PC-9 (cell line): ENCODE measurements at regions of chr1 and their contacts with region 1.

Region 1: GRCh38 chr1:42146626-42147320 is 6.4 kb upstream of the GUCA2B start:
- DNase-seq: peak; percentile 85 to 89
- H3K4me3 ChIP-seq: no peak overlapping the region
- H3K27ac ChIP-seq: no peak overlapping the region
- H3K4me1 ChIP-seq: peaks cover 26% of the 10 kb centered on the region
- H3K27me3 ChIP-seq: no peaks in the 10 kb centered on the region; the same call in 1 of the 2 replicates
- CTCF ChIP-seq: peak; percentile 94

Region 2: GRCh38 chr1:41919764-41920397 is 226.9 kb before region 1 on chr1:
- CTCF ChIA-PET with region 1: no interaction called
- POLR2A ChIA-PET with region 1: interaction called, 5 read pairs
- intact Hi-C with region 1: loop called (anchors 10 kb)
- DNase-seq: peak; percentile 83
- H3K4me3 ChIP-seq: peak overlapping the region; percentile 87
- H3K27ac ChIP-seq: peak overlapping the region; percentile 75
- H3K4me1 ChIP-seq: peaks cover 57% of the 10 kb centered on the region
- H3K27me3 ChIP-seq: no peaks in the 10 kb centered on the region
- CTCF ChIP-seq: no peak

Region 3: DNA sequence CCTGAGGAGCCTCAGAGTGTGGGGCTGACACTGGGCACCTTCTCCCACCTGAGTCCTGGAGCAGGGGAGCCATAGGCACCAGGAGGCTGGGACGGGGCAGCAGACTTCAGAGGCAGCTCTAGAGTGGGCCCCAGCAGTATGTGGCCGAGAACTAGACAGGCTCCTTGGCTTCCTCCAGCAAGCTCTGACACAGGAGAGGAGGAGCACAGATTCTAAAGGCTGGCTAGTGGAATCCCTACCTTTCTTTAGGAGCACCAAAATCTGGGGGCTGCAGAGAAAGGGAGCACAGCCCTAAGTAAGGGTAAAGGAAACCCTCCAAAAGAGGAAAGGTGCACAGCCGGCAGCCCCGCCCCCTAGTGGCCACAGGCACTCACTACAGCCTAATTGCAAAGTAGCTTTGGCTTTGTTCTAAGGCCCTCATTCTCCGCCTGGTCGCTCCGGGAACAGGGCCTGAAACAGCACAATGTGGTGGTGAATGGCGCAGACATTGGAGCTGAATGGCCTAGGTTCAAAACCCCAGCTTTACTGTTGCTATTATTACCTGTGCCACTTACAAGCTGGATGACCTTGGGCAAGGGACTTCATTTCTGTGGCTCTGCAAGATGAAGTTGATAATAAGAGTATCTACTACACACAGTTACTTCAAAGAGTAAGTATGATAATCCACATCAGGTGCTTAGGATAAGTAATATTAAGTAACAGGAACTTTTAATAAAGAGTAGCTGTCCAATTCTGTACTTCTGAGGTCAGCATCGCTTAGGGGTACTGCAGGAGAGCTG is 26.6 kb after region 1 on chr1:
- CTCF ChIA-PET with region 1: interaction called, 9 read pairs
- POLR2A ChIA-PET with region 1: no interaction called
- intact Hi-C with region 1: loop called (anchors 1 kb)
- DNase-seq: peak in 1 of 2 experiments; percentile 65
- H3K4me3 ChIP-seq: no peak overlapping the region
- H3K27ac ChIP-seq: 0 out of 2 replicates have a peak overlapping the region, but pooled peaks have one; percentile 1
- H3K4me1 ChIP-seq: peaks cover 47% of the 10 kb centered on the region
- H3K27me3 ChIP-seq: no peaks in the 10 kb centered on the region
- CTCF ChIP-seq: peak; percentile 98

Region 4: DNA sequence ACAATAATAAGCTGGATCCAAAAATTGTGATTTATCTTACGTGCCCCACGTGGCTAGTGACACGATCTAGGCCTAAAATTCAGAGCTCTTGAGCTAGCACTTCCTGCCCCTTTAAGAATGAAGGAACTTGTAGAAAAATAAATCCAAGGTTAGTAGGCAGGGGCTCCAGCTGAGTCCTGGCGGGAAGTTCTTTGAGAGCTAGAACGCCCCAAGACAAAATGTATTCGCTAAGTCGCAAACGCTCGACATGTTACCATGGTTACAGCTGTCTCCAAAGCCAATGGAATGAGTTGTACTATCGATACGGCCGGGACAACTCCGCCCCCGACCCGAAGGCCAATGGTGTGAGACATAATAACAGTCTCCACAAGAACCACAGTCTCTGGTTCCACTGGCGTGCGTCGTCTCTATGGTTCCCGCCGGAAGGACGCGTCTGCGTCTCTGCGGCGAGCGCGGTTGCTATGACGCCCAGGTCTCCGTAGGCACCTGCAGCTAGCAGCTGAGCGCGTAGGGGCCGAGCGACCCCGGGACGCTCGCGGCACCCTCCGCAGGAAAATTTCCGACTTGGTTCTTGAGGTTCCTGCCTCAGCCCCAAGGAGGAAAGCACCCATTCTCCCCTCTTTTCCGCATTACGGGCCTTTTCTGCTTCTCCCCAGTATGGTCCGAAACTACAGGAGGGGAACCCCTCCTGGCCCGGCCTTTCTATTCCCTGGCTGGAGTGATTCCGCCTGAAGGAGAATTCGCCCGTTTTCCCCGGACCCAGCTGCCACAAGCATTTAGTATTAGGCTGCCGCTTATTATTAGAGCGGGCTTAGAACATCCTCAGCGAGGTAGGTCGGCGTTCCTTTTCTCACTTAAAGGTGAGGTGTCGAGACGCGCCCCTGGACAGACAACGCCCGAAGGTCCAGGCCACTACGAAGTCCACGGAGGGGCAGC is 316.3 kb after region 1 on chr1 and contains the start of gene CCDC30:
- CTCF ChIA-PET with region 1: no interaction called
- POLR2A ChIA-PET with region 1: no interaction called
- intact Hi-C with region 1: loop called (anchors 1 kb)
- DNase-seq: peak; percentile 99
- H3K4me3 ChIP-seq: peak within 1 kb of the TSS; percentile 73
- H3K27ac ChIP-seq: peak within 1 kb of the TSS; percentile 36; the same call in 1 of the 2 replicates
- H3K4me1 ChIP-seq: peaks cover 20% of the 10 kb centered on the region
- H3K27me3 ChIP-seq: no peaks in the 10 kb centered on the region
- CTCF ChIP-seq: no peak
- total RNA-seq, gene CCDC30: 6.9 and 10.2 TPM in 2 replicates

Region 5: DNA sequence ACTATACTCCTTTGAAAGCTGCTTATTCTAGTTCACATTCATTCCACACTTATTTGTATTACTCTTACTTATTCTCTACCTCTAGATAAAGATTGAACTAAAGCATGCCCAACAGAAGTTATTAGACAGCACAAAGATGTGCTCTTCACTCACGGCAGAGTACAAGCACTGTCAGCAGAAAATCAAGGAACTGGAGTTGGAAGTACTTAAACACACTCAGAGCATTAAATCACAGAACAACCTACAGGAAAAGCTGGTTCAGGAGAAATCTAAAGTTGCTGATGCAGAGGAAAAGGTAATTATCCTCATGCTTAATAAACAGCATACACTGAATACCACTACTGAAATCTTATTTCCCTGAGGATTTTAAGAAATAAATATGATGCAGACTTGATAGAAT is 430.2 kb after region 1 on chr1:
- CTCF ChIA-PET with region 1: no interaction called
- POLR2A ChIA-PET with region 1: no interaction called
- intact Hi-C with region 1: loop called (anchors 10 kb)
- DNase-seq: no peak
- H3K4me3 ChIP-seq: no peak overlapping the region
- H3K27ac ChIP-seq: no peak overlapping the region
- H3K4me1 ChIP-seq: no peaks in the 10 kb centered on the region
- H3K27me3 ChIP-seq: no peaks in the 10 kb centered on the region
- CTCF ChIP-seq: no peak

Region 6: DNA sequence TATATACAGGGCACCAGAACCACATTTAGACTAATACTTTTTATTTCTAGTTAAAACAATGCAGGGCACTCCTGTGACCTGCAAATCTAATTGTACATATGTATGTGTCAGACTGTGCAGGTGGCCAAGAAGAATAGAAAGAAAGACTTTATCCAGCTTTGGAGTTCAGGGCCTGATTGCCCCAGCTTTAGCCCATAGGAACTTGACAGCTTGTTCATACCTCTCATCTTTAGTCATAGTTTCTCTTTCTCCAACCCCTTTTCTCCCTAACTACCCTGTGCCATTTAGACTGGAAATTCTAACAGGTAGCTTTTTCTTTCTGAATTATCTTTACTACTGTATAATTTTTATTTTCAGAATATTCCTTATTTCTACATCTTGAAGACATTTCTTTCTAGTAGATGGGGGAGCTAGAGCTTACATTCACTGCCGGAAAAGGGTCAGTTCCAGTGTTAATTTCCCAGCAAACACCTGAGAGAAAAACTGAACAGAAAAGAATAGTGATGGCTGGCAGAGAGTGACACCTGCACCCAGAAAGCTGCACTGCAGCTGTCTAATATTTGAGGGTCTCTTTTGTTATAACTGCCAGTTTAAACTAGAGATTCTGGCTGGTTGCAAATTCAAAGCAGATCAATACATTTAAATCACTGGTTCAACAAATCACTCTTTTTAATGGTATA is 543.8 kb after region 1 on chr1:
- CTCF ChIA-PET with region 1: no interaction called
- POLR2A ChIA-PET with region 1: no interaction called
- intact Hi-C with region 1: loop called (anchors 10 kb)
- DNase-seq: no peak
- H3K4me3 ChIP-seq: no peak overlapping the region
- H3K27ac ChIP-seq: peak overlapping the region; percentile 56; the same call in 1 of the 2 replicates
- H3K4me1 ChIP-seq: peaks cover 74% of the 10 kb centered on the region
- H3K27me3 ChIP-seq: no peaks in the 10 kb centered on the region
- CTCF ChIP-seq: peak; percentile 30; the same call in 1 of the 2 replicates

Region 7: DNA sequence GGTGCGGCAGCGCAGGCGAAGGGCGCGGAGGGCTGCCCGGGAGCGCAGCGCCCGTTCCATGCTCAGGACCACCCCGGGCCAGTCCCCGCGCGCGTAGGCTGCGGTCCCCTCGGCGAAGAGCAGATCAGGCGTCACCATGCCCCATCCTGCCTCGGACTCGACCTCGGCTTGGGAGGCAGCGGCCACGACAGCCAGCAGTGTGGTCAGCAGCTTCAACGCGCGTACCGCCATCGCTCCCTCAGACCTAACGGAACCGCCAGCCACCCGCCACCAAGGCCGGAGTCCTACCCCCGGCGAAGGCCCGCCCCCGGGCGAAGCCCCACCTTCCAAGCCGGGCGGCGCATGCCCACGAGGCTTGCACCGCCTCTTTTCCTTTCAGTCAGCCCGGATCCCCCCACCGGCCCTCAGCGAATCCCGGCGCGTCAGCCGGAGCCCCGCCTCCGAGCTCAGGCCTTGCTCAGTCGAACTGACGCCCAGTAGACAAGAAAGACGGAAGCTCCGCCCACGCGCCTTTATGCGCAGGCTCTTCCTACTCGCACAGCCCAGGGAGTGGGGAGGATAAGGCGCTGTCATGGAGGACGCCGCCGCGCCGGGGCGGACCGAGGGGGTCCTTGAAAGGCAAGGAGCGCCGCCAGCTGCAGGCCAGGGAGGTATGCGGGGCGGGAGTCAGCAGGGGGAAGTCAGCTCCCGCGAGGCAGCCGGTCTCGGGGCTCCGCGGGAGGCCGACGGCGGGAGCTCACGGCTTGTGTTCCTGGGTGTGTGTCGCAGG is 620.2 kb after region 1 on chr1 and contains the starts of genes C1orf50 and P3H1:
- CTCF ChIA-PET with region 1: no interaction called
- POLR2A ChIA-PET with region 1: no interaction called
- intact Hi-C with region 1: loop called (anchors 2 kb)
- DNase-seq: peak; percentile 96 to 100
- H3K4me3 ChIP-seq: peak within 1 kb of the TSS; percentile 86
- H3K27ac ChIP-seq: no peak within 1 kb of the TSS
- H3K4me1 ChIP-seq: peaks cover 24% of the 10 kb centered on the region
- H3K27me3 ChIP-seq: no peaks in the 10 kb centered on the region
- CTCF ChIP-seq: no peak
- total RNA-seq, gene C1orf50: 5.6 and 8.3 TPM in 2 replicates
- total RNA-seq, gene P3H1: 22.8 and 45.5 TPM in 2 replicates